ENCODE measurements at regions of chr16 and their contacts with region 1.

Region 1: GRCh38 chr16:50448501-50448900 is 79.7 kb upstream of the BRD7 start:
- DNase-seq: no peak
- H3K4me3 ChIP-seq: no peak overlapping the region
- H3K27ac ChIP-seq: no peak overlapping the region
- H3K4me1 ChIP-seq: no peaks in the 10 kb centered on the region
- H3K27me3 ChIP-seq: no peaks in the 10 kb centered on the region
- CTCF ChIP-seq: no peak
- EP300 ChIP-seq: no peak
- POLR2A ChIP-seq: no peak

Region 2: DNA sequence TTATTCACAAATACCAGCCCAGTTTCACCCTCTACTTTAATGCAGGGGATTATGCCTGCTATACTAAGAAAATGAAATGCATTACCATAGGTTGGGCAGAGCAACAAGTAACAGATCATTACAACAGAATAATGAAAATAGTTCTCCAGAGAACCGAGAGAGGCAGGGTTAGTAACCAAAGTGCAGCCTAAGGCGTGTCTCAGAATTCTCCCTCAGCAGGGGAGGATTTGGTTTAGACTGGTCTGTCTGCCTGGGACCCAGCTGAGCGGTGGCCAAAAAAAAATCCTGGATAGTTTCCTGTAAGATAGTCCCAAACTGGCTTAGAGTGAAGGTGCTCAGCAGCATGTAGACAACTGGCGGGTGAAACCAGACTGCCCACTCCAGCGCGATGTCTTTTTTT is 212.9 kb before region 1 on chr16:
- in situ Hi-C with region 1: no loop called
- intact Hi-C with region 1: no loop called
- DNase-seq: no peak
- H3K4me3 ChIP-seq: no peak overlapping the region
- H3K27ac ChIP-seq: no peak overlapping the region
- H3K4me1 ChIP-seq: no peaks in the 10 kb centered on the region
- H3K27me3 ChIP-seq: no peaks in the 10 kb centered on the region
- CTCF ChIP-seq: no peak
- EP300 ChIP-seq: no peak
- POLR2A ChIP-seq: no peak

Region 3: GRCh38 chr16:50251375-50252081 is 197.0 kb before region 1 on chr16:
- in situ Hi-C with region 1: no loop called
- intact Hi-C with region 1: no loop called
- DNase-seq: no peak
- H3K4me3 ChIP-seq: no peak overlapping the region
- H3K27ac ChIP-seq: peak overlapping the region in 1 of 4 donors; percentile 19
- H3K4me1 ChIP-seq: peaks cover 0 to 13% (median 2%) of the 10 kb centered on the region in 4 donors
- H3K27me3 ChIP-seq: no peaks in the 10 kb centered on the region
- CTCF ChIP-seq: no peak
- EP300 ChIP-seq: no peak
- POLR2A ChIP-seq: no peak

Region 4: DNA sequence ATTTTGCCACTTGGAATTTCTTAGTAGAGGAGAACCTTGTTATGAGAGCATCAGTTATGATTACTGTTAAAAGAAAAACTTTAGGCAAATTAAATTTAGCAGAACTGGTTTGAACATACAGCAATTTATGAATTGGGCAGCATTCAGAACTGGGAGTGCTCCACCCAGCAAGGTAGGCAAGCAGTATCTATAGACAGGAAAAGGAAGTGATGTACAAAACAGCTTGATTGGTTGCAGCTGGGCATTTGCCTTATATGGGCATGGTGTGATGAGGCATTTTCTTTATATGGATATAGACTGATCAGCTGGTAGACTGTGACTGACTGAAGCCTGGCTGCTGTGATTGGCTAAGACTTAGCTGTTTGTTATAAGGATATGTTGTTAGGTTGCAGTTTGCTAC is 275.8 kb after region 1 on chr16:
- in situ Hi-C with region 1: no loop called
- intact Hi-C with region 1: no loop called
- DNase-seq: no peak
- H3K4me3 ChIP-seq: no peak overlapping the region
- H3K27ac ChIP-seq: no peak overlapping the region
- H3K4me1 ChIP-seq: no peaks in the 10 kb centered on the region
- H3K27me3 ChIP-seq: no peaks in the 10 kb centered on the region
- CTCF ChIP-seq: no peak
- EP300 ChIP-seq: no peak
- POLR2A ChIP-seq: no peak

Region 5: DNA sequence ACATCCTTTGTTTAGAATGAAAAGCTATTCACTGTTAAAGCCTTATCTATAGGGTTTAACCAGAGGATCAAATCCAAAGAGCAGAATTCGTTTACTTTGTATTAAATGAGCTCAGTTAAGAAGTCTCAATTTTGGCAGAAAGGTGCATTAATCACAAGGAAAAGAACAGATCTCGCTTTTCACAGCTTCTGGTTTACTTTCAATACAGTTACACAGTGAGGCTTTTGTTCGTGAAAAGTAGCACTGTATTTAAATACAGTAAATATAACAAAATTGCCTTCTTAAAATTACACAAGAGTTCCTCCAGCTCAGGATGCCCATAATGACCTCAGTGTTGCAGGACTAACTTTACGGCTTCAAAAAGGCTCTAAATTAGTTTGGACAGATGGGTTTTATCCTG is 1371.7 kb after region 1 on chr16:
- in situ Hi-C with region 1: no loop called
- intact Hi-C with region 1: loop called (anchors 10 kb)
- DNase-seq: no peak
- H3K4me3 ChIP-seq: no peak overlapping the region
- H3K27ac ChIP-seq: no peak overlapping the region
- H3K4me1 ChIP-seq: no peaks in the 10 kb centered on the region
- H3K27me3 ChIP-seq: no peaks in the 10 kb centered on the region
- CTCF ChIP-seq: no peak
- EP300 ChIP-seq: no peak
- POLR2A ChIP-seq: no peak